ENCODE measurements at regions of chr22 and their contacts with region 1.

Region 1: GRCh38 chr22:41780746-41781505 is 19.6 kb upstream of the CCDC134 start:
- DNase-seq: peak; percentile 87
- ATAC-seq: peak; percentile 37

Region 2: DNA sequence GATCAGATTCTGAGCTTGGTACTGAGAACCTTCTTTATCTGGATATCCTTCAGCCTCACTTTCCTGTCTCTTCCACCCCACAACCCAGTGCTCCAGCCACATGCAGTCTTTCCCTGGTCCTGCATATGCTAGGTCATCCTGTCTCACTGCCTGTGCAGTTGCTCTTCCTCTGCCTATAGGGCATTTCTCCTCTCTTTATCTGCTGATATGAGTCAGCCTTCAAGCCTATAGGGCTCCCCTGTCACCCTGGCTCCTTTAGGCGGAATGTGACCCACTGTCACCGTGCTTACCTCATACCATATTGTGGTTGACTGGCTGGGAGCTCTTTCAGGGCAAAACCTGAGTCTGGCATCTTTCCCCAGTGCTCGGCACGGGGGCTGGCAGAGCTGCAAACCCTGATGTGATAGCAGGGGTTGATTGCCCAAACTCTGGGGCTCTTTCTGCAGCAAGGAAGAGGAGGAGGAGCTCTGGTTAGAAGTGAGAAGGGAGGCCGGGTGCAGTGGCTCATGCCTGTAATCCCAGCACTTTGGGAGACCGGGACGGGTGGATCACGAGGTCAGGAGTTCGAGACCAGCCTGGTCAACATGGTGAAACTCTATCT is 55.3 kb before region 1 on chr22:
- intact Hi-C with region 1: loop called (anchors 10 kb)
- DNase-seq: no peak
- ATAC-seq: no peak

Measured in Right ventricle myocardium inferior (tissue), 1 donor.